HepG2 (cell line): ENCODE measurements at regions of chr10 and their contacts with region 1.

Region 1: DNA sequence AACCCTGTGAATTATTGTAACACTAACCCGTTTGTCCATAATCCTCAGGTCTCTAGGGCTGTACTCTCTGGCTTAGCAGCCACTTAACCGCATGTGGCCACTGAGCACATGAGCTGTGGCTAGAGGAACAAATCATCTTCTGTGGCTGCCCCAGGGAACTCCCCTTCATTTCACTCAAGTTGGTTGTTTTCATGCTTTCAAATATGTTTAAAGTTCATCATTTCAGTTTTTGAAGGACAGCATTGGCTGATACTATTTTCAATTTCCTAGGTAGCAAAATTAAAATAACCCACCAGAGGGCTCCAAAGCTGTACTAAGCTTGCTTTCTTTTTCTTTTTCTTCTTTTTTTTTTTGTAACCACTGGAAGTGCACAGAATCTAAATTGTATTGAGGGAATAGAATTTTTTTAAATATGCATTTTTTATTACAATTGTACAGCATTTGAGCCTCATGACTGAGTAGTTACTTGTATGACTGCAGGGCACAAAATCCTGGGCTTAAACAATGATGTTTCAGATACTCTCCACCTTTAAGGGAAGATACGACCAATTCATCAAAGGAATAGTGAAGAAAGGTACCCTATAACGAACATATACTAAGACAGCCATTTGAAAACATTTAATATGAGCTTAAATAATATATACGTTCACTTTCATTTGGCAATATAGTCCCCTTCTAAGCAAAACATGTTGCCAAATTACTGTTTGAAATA is 38.6 kb downstream of the MRC1 start:
- DNase-seq: no peak
- ATAC-seq: no peak
- H3K4me3 ChIP-seq: no peak overlapping the region
- H3K27ac ChIP-seq: no peak overlapping the region
- H3K4me1 ChIP-seq: no peaks in the 10 kb centered on the region
- H3K27me3 ChIP-seq: peaks cover 0 to 10% of the 10 kb centered on the region in 2 experiments; a peak in 2 of 5 replicates
- CTCF ChIP-seq: no peak
- EP300 ChIP-seq: no peak
- POLR2A ChIP-seq: no peak
- RAD21 ChIP-seq: no peak

Region 2: GRCh38 chr10:17703706-17704105 is 144.0 kb before region 1 on chr10:
- CTCF ChIA-PET with region 1: no interaction called
- POLR2A ChIA-PET with region 1: no interaction called
- in situ Hi-C with region 1: no loop called
- intact Hi-C with region 1: no loop called
- DNase-seq: no peak
- ATAC-seq: no peak
- H3K4me3 ChIP-seq: no peak overlapping the region
- H3K27ac ChIP-seq: no peak overlapping the region
- H3K4me1 ChIP-seq: no peaks in the 10 kb centered on the region
- H3K27me3 ChIP-seq: no peaks in the 10 kb centered on the region
- CTCF ChIP-seq: no peak
- EP300 ChIP-seq: no peak
- POLR2A ChIP-seq: no peak
- RAD21 ChIP-seq: no peak

Region 3: DNA sequence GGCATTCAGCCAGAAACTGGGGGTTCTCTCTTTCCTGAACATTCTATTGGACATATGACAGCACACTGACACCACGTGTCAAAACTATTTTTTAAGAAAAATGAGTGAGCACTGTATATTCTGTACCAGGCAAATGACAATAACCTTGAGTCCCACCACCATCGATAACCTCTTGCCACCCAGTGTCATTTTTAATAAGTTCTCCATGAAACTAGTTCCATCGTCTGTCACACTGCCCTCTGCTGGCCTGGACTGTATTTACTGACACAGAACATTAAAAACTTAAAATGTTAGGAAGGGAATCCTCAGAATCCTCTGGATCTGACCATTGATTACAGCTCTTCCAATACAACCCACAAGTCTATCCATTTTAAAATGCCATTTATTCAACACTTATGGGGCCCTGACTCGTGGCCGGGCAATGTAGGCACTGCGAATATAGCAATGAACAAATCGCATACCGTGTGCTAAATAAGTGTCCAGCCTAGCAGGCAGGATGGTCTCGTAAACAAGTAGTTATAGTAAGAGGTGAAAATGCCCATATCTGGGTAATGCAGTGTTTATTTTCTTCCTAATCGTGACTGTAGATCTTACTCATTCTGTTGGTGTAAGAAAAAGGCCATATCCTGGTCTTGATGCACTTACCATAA is 256.6 kb after region 1 on chr10:
- CTCF ChIA-PET with region 1: no interaction called
- POLR2A ChIA-PET with region 1: no interaction called
- in situ Hi-C with region 1: no loop called
- intact Hi-C with region 1: loop called (anchors 1 kb)
- DNase-seq: peak; percentile 23
- ATAC-seq: peak; percentile 34; the same call in 1 of the 3 replicates
- H3K4me3 ChIP-seq: no peak overlapping the region
- H3K27ac ChIP-seq: no peak overlapping the region
- H3K4me1 ChIP-seq: no peaks in the 10 kb centered on the region
- H3K27me3 ChIP-seq: no peaks in the 10 kb centered on the region; a peak in 1 of 5 replicates
- CTCF ChIP-seq: peak; percentile 55
- EP300 ChIP-seq: no peak
- POLR2A ChIP-seq: no peak
- RAD21 ChIP-seq: no peak

Region 4: GRCh38 chr10:18214691-18215563 is 367.2 kb after region 1 on chr10:
- CTCF ChIA-PET with region 1: no interaction called
- POLR2A ChIA-PET with region 1: no interaction called
- in situ Hi-C with region 1: loop called (anchors 10 kb)
- intact Hi-C with region 1: loop called (anchors 5 kb)
- DNase-seq: peak; percentile 16
- ATAC-seq: peak; percentile 81
- H3K4me3 ChIP-seq: no peak overlapping the region
- H3K27ac ChIP-seq: no peak overlapping the region
- H3K4me1 ChIP-seq: no peaks in the 10 kb centered on the region
- H3K27me3 ChIP-seq: no peaks in the 10 kb centered on the region
- CTCF ChIP-seq: peak; percentile 76
- EP300 ChIP-seq: no peak
- POLR2A ChIP-seq: no peak
- RAD21 ChIP-seq: no peak

Region 5: DNA sequence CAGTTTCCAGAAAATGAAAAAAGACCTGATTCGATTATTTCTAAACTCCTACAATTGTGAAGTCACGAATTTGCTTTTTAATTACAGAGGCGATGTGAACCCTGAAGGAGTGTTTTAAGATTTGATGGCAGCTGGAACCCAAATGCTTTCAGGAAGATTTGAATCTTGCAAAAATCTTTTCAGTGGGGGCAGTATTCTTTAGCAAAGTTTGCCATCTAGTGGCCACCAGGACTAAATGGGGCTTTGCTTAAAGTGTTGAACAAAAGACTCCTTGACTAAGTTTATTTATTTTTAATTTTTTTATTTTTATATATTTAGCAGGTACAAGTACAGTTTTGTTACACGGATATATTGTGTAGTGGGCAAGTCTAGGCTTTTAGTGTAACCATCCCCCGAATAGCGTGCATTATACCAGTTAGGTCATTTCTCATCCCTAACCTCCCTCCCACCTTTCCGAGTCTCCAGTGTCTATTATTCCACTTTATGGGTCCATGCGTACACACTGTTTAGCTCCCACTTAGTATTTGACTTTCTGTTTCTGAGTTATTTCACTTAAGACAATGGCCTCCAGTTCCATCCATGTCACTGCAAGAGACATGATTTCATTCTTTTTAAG is 391.2 kb after region 1 on chr10:
- CTCF ChIA-PET with region 1: no interaction called
- POLR2A ChIA-PET with region 1: no interaction called
- in situ Hi-C with region 1: no loop called
- intact Hi-C with region 1: loop called (anchors 1 kb)
- DNase-seq: peak; percentile 10
- ATAC-seq: no peak
- H3K4me3 ChIP-seq: no peak overlapping the region
- H3K27ac ChIP-seq: no peak overlapping the region
- H3K4me1 ChIP-seq: no peaks in the 10 kb centered on the region
- H3K27me3 ChIP-seq: no peaks in the 10 kb centered on the region; a peak in 1 of 5 replicates
- CTCF ChIP-seq: peak; percentile 41
- EP300 ChIP-seq: no peak
- POLR2A ChIP-seq: no peak
- RAD21 ChIP-seq: no peak